Activated CD4-positive, alpha-beta memory T cell treated with anti-CD3 and anti-CD28 coated beads for 36 hours (primary cell): ENCODE measurements at regions of chr22 and their contacts with region 1.

Region 1: GRCh38 chr22:41780746-41781505 is 19.6 kb upstream of the CCDC134 start:
- DNase-seq: peak; percentile 96
- H3K4me3 Mint-ChIP-seq: peak overlapping the region; percentile 84
- H3K27ac Mint-ChIP-seq: peak overlapping the region; percentile 92
- H3K4me1 Mint-ChIP-seq: peaks cover 43% of the 10 kb centered on the region
- H3K27me3 Mint-ChIP-seq: no peaks in the 10 kb centered on the region

Region 2: GRCh38 chr22:41752011-41752970 is 28.6 kb before region 1 on chr22:
- CTCF ChIA-PET with region 1: interaction called, 36 read pairs
- POLR2A ChIA-PET with region 1: interaction called, 4 read pairs
- intact Hi-C with region 1: loop called (anchors 1 kb)
- DNase-seq: peak; percentile 18
- H3K4me3 Mint-ChIP-seq: no peak overlapping the region
- H3K27ac Mint-ChIP-seq: peak overlapping the region; percentile 82
- H3K4me1 Mint-ChIP-seq: peaks cover 7% of the 10 kb centered on the region
- H3K27me3 Mint-ChIP-seq: peaks cover 4% of the 10 kb centered on the region

Region 3: DNA sequence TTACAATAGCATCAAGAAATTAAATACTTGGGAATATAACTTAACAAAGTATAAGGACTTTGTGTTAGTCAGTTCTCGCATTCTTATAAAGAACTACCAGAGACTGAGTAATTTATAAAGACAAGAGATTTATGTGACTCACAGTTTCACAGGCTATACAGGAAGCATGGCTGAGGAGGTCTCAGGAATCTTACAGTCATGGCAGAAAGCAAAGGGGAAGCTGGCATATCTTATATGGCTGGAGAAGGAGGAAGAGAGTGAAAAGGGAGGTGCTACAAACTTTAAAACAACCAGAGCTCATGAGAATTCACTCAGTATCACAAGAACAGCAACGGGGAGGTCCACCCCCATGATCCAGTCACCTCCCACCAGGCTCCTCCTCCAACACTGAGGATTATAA is 12.5 kb before region 1 on chr22:
- CTCF ChIA-PET with region 1: interaction called, 10 read pairs
- POLR2A ChIA-PET with region 1: interaction called, 15 read pairs
- intact Hi-C with region 1: no loop called
- DNase-seq: no peak
- H3K4me3 Mint-ChIP-seq: no peak overlapping the region
- H3K27ac Mint-ChIP-seq: no peak overlapping the region
- H3K4me1 Mint-ChIP-seq: peaks cover 18% of the 10 kb centered on the region
- H3K27me3 Mint-ChIP-seq: no peaks in the 10 kb centered on the region

Region 4: GRCh38 chr22:41800348-41801146 is 19.6 kb after region 1 on chr22 and contains the start of gene CCDC134:
- CTCF ChIA-PET with region 1: interaction called, 38 read pairs
- POLR2A ChIA-PET with region 1: interaction called, 114 read pairs
- intact Hi-C with region 1: loop called (anchors 1 kb)
- DNase-seq: peak; percentile 95
- H3K4me3 Mint-ChIP-seq: peak within 1 kb of the TSS; percentile 98
- H3K27ac Mint-ChIP-seq: peak within 1 kb of the TSS; percentile 95
- H3K4me1 Mint-ChIP-seq: peaks cover 35% of the 10 kb centered on the region
- H3K27me3 Mint-ChIP-seq: no peaks in the 10 kb centered on the region
- total RNA-seq, gene CCDC134: 16.1 to 17.6 TPM

Region 5: DNA sequence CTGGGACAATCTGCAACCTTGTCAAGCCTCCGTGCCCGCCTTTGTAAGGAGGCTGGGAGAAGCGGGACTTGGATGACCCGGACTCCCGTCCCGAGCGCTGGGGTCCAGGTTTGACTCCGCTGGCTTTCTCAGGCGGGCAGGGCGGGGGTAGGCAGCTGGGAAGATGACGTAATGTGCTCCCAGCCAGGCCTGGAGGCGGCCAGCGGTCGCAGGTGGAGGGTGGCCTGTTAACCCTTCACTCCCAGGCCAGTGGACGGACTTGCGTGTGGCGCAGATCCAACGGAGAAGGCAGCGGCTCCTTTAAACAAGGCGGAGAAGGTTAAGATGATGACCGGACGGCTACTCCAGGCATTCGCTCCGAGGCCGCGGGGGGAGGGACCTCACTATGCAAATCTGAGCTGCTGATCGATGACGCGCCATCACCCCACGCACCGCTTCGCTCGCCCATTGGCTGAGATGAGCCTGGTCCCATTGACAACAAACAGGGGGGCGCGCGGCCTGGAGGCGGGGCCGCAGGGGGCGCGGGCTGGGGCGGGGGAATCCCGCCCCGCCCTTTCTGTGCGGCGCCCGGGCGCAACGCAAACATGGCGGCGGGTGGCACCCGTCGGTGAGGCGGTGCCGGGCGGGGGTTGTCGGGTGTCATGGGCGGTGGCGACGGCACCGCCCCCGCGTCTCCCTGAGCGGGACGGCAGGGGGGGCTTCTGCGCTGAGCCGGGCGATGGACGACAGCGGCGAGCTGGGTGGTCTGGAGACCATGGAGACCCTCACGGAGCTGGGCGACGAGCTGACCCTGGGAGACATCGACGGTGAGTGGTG is 51.8 kb after region 1 on chr22 and contains the start of gene SREBF2:
- CTCF ChIA-PET with region 1: interaction called, 4 read pairs
- POLR2A ChIA-PET with region 1: interaction called, 28 read pairs
- intact Hi-C with region 1: no loop called
- DNase-seq: peak; percentile 100
- H3K4me3 Mint-ChIP-seq: peak within 1 kb of the TSS; percentile 98
- H3K27ac Mint-ChIP-seq: peak within 1 kb of the TSS; percentile 99
- H3K4me1 Mint-ChIP-seq: peaks cover 44% of the 10 kb centered on the region
- H3K27me3 Mint-ChIP-seq: no peaks in the 10 kb centered on the region
- total RNA-seq, gene SREBF2: 131 to 137 TPM

Region 6: DNA sequence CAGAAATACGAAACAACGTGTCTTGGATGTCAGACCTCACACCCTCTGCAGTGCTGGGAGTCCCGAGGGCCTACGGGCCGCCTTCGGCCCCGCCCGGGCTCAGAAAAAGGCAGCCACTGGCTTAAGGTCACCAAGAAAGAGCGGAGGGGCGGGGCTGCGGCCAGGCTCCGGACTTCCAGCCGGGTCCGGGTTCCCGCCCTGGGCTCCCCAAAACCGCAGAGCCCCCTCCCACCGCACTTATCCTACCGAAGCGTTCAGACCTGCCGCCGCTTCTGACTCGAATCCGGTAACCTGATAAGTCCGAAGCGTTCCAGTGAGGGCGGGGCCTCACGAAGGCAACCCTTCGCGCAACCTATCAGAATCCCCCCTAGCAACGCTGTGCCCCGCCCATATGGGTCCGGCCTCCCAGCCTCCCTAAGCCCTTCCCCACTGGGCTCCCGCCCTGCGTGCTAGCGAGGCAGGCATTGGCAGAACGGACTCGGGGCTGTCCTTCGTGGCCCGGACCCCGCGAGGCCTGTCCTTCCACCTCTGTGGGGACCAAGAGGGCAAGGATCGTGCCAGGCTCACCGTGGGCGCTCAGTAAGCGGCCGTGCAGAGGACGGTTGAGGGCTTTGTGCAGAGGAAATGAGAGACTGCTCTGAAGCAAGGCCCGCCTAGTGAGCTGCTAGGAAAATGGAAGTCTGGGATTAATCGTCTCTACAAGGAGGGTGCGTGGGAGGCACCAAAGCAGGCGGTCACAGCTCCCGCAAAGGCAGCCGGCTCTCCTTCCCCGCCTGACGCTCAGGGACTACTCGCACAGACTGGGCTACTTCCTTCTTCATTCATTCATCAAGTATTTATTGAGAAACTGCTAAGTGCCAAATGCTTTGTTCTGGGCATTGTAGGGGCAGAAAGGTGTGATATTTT is 289.8 kb after region 1 on chr22 and contains the start of gene NAGA:
- CTCF ChIA-PET with region 1: no interaction called
- POLR2A ChIA-PET with region 1: no interaction called
- intact Hi-C with region 1: loop called (anchors 5 kb)
- DNase-seq: peak; percentile 97
- H3K4me3 Mint-ChIP-seq: peak within 1 kb of the TSS; percentile 88
- H3K27ac Mint-ChIP-seq: peak within 1 kb of the TSS; percentile 89
- H3K4me1 Mint-ChIP-seq: peaks cover 32% of the 10 kb centered on the region
- H3K27me3 Mint-ChIP-seq: no peaks in the 10 kb centered on the region
- total RNA-seq, gene NAGA: 28.9 to 30.5 TPM